ENCODE measurements at regions of chr11 and their contacts with region 1.

Region 1: GRCh38 chr11:1546536-1547400 is 25.3 kb downstream of the DUSP8 start:
- DNase-seq: peak; percentile 61
- H3K4me3 ChIP-seq: peak overlapping the region; percentile 47
- H3K27ac ChIP-seq: peak overlapping the region; percentile 85
- H3K4me1 ChIP-seq: peaks cover 7% of the 10 kb centered on the region
- H3K27me3 ChIP-seq: peaks cover 10% of the 10 kb centered on the region
- CTCF ChIP-seq: peak; percentile 53

Region 2: DNA sequence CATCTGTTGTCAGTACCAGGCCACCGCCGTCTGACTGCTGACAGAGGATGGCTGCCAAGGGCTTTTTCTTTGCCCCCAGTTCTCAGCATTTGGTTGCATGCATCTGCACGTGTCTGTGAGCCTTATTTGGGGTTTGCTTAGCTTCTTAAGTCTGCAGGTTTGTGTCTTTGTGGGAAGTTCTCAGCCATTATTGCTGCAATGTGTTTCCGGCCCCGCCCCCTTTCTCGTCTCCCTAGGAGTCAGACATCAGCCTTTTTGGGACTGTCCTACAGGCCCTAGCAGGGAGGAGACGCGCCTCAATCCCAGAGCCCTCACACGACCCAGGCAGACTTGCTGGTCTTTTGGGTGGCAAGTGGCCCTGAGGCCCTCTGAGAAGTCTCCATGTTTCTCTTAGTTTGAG is 68.2 kb before region 1 on chr11:
- intact Hi-C with region 1: no loop called
- DNase-seq: no peak
- H3K4me3 ChIP-seq: no peak overlapping the region
- H3K27ac ChIP-seq: no peak overlapping the region
- H3K4me1 ChIP-seq: no peaks in the 10 kb centered on the region
- H3K27me3 ChIP-seq: no peaks in the 10 kb centered on the region
- CTCF ChIP-seq: no peak

Region 3: DNA sequence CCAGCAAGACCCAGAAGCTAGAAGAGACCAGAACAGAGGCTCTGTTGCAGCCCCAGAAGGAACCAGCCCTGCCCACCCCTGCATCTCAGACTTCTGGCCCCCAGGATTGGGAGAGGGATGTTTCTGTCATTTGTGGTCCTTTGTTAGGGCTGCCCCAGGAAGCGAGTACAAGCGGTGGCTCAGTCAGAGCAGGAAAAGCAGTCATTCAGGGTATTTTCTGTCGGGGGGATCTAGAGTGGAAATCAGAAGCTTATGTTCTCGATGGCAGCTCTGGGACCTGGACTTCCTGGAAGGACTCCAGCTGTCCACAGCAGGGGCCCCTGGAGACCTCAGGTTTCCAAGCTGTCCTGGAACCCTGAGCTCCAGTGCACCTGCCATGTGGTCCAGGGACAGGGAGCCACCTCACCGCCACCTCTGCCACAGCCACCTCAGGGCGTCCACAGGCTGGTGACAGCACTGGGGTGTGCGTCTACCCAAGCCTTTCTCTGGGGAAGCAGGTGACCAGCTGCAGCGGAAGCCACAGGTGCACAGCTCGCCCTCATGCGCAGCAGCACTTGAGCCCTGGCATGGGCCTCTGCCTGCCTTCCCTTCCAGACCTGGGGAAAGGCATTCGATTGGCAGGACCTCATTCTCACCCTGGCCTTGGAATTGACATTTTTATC is 85.4 kb after region 1 on chr11:
- intact Hi-C with region 1: loop called (anchors 5 kb)
- DNase-seq: no peak
- H3K4me3 ChIP-seq: no peak overlapping the region
- H3K27ac ChIP-seq: no peak overlapping the region
- H3K4me1 ChIP-seq: no peaks in the 10 kb centered on the region
- H3K27me3 ChIP-seq: no peaks in the 10 kb centered on the region
- CTCF ChIP-seq: no peak